ENCODE measurements at regions of chr7 and their contacts with region 1.

Region 1: GRCh38 chr7:95608359-95609173 is 12.2 kb upstream of the PDK4 start:
- DNase-seq: peak; percentile 93 to 96
- ATAC-seq: peak; percentile 96 to 98 (median 98)
- H3K4me3 ChIP-seq: peak overlapping the region; percentile 40
- H3K27ac ChIP-seq: peak overlapping the region; percentile 88
- H3K4me1 ChIP-seq: peaks cover 24% of the 10 kb centered on the region
- H3K27me3 ChIP-seq: no peaks in the 10 kb centered on the region
- CTCF ChIP-seq: no peak

Region 2: GRCh38 chr7:95316588-95316987 is 292.0 kb before region 1 on chr7:
- intact Hi-C with region 1: no loop called
- DNase-seq: no peak
- ATAC-seq: no peak
- H3K4me3 ChIP-seq: no peak overlapping the region
- H3K27ac ChIP-seq: no peak overlapping the region
- H3K4me1 ChIP-seq: no peaks in the 10 kb centered on the region
- H3K27me3 ChIP-seq: no peaks in the 10 kb centered on the region
- CTCF ChIP-seq: no peak

Region 3: GRCh38 chr7:95658676-95659075 is 50.1 kb after region 1 on chr7:
- intact Hi-C with region 1: loop called (anchors 5 kb)
- DNase-seq: no peak
- ATAC-seq: no peak
- H3K4me3 ChIP-seq: no peak overlapping the region
- H3K27ac ChIP-seq: no peak overlapping the region
- H3K4me1 ChIP-seq: peaks cover 14% of the 10 kb centered on the region
- H3K27me3 ChIP-seq: no peaks in the 10 kb centered on the region
- CTCF ChIP-seq: no peak

Region 4: GRCh38 chr7:95811846-95812445 is 203.4 kb after region 1 on chr7:
- intact Hi-C with region 1: no loop called
- DNase-seq: no peak
- ATAC-seq: no peak
- H3K4me3 ChIP-seq: no peak overlapping the region
- H3K27ac ChIP-seq: no peak overlapping the region
- H3K4me1 ChIP-seq: no peaks in the 10 kb centered on the region
- H3K27me3 ChIP-seq: no peaks in the 10 kb centered on the region
- CTCF ChIP-seq: no peak